ENCODE measurements at regions of chr2 and their contacts with region 1.

Region 1: GRCh38 chr2:43169987-43170386 is 56.4 kb downstream of the ZFP36L2 start:
- DNase-seq: peak in 1 of 2 experiments; percentile 88
- H3K4me3 ChIP-seq: no peak overlapping the region
- H3K27ac ChIP-seq: no peak overlapping the region
- H3K4me1 ChIP-seq: peaks cover 0 to 15% (median 2%) of the 10 kb centered on the region in 4 experiments; a peak in 6 of 7 replicates
- H3K27me3 ChIP-seq: no peaks in the 10 kb centered on the region
- CTCF ChIP-seq: peak; percentile 83 to 84 (median 83)
- EP300 ChIP-seq: no peak
- POLR2A ChIP-seq: no peak
- RAD21 ChIP-seq: peak; percentile 71 to 82

Region 2: DNA sequence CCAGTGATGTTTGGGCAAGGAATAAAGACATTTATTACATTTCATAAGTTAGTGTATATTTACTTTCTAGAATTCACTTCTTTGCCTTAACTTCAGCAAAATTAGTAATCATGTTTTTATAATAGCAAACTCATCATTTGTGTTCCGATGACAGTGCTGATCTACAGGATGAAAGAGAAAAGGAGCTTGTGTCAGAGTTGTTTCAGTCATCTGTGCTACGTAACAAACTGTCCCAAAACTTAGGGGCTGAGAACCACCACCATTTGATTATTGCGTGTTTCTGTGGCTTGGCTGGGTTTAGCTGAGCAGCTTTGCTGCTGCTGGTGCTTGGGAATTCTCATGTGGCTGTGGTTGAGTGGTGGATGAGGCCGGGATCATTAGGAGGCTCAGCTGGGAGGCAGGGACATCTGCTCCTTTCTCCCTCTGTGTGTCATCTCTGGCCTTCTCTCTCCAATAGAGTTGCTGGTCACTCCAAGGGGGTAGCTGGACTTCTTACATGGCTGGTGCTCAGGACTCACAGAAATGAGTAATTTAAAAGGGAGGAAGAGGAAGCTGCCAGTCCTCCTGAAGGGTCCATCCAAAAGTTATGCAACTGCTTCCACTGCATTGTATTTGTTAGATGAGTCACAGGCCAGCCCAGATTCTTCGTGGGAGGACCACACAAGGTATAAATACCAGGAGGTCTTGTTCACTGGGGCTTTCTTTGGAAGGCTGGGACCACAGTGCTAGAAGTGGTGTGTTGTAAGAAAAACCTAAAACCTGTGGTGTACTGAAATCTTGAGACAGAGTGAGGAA is 334.2 kb before region 1 on chr2:
- CTCF ChIA-PET with region 1: no interaction called
- POLR2A ChIA-PET with region 1: no interaction called
- DNase-seq: peak in 1 of 2 experiments; percentile 11
- H3K4me3 ChIP-seq: no peak overlapping the region
- H3K27ac ChIP-seq: no peak overlapping the region
- H3K4me1 ChIP-seq: no peaks in the 10 kb centered on the region
- H3K27me3 ChIP-seq: no peaks in the 10 kb centered on the region
- CTCF ChIP-seq: no peak
- EP300 ChIP-seq: no peak
- POLR2A ChIP-seq: no peak
- RAD21 ChIP-seq: no peak

Region 3: DNA sequence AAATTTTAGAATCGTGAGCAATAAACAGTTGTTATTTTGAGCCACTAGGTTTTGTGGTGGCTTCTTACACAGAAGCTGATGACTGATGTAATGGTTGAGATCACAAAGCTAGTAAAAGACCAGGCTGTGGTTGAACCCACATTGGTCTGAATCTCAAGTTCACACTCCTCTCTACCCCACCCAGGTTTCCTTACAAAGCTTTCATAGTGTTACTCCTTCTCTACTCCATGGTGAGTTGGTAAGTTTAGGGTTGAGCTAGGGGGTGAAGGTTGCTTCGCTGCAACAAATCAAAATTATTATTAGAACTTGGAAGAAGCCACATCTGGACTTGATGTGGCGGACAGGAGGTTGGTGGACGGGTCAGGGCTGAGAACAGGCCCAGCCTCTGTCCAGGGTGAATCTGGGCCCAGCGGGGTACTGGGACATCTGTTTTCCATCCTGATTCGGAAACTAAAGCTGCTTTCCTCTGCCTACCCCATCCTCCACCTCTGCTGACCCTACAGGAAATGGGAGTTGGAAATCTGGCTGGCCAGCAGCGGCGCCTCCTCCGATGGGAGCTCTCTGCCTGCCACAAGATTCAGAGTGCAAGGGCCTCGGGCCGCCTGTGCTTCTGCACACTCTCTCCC is 29.9 kb before region 1 on chr2:
- CTCF ChIA-PET with region 1: interaction called, 14 read pairs
- POLR2A ChIA-PET with region 1: no interaction called
- DNase-seq: no peak
- H3K4me3 ChIP-seq: no peak overlapping the region
- H3K27ac ChIP-seq: no peak overlapping the region
- H3K4me1 ChIP-seq: peaks cover 0 to 18% (median 8%) of the 10 kb centered on the region in 4 experiments; a peak in 6 of 7 replicates
- H3K27me3 ChIP-seq: no peaks in the 10 kb centered on the region
- CTCF ChIP-seq: no peak
- EP300 ChIP-seq: no peak
- POLR2A ChIP-seq: no peak
- RAD21 ChIP-seq: no peak

Region 4: DNA sequence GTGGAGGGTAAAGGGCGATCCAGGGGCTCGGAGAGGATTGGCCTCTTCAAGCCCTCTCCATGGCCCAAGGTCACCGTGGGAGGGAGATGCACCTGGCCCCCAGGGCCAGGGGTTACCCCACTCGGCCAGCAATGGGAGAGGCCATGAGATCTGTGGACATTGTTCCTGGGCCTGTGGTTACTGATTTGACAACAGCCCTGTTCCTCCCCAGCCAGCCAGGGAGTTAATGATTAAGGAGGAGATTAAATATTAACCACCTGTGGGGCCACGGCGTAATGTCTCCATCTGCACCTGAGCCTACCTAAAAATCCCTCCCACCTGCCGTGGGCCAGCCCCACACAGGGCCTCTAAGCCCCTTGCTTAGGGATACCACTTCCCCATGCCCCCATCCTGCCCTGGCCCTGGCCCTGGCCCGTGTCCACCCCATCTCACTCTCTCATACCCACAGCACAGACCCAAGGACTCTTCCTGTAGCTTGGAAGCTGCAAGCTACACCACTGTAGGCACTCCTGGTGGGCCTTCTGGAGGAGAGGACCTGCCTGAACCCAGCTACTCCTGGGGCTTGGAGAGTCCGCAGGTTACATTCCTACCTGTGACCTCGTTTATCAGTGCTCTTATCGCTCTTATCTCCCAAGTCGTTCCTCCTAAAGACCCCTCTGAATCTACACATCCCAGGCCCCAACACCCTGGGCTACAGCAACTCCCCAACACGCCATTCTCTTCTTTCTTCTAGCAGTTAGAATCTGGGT is 24.3 kb after region 1 on chr2:
- CTCF ChIA-PET with region 1: interaction called, 28 read pairs
- POLR2A ChIA-PET with region 1: no interaction called
- DNase-seq: no peak
- H3K4me3 ChIP-seq: no peak overlapping the region
- H3K27ac ChIP-seq: no peak overlapping the region
- H3K4me1 ChIP-seq: peaks cover 0 to 3% (median 1%) of the 10 kb centered on the region in 4 experiments; a peak in 4 of 7 replicates
- H3K27me3 ChIP-seq: no peaks in the 10 kb centered on the region
- CTCF ChIP-seq: no peak
- EP300 ChIP-seq: no peak
- POLR2A ChIP-seq: no peak
- RAD21 ChIP-seq: no peak

Region 5: DNA sequence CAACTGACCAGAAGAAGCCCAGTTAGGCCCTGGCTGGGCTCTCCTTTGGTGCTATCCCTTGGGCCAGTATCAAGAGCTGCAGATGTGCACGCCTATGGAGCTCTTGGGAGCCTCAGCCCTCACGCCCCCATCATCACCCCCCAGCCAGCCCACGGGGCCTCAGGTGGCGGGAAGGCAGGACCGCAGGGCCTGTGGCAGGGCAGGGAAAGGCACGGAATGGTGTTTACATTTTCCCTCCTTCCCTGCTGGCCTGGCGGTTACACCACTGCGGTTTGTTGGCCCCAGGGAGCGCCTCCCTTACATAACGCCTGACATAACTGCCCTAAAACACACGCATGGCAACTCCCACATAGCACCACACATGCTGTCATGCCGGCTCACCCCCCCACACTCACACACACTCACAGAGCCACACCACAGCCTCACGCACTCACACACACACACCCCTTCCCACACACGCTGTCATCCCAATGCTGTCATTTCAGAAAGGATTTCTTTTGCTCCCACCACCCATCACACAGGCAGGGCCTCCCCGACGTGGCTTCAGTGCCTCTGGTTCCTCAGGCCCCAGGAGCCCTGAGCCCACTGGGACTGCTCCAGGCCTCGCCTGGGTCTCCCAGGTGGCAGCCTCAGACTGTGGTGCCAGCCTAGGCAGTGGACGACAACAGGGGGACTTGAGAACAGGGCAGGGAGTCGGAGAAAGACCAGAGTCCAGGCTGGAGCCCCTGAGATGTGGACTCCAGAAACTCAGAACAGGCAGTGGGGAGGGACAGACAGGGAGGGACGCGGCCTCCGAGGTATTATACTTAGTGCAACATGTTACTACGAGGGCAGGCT is 40.7 kb after region 1 on chr2:
- CTCF ChIA-PET with region 1: interaction called, 65 read pairs
- POLR2A ChIA-PET with region 1: interaction called, 3 read pairs
- DNase-seq: no peak
- H3K4me3 ChIP-seq: no peak overlapping the region
- H3K27ac ChIP-seq: no peak overlapping the region
- H3K4me1 ChIP-seq: peaks cover 0 to 12% (median 6%) of the 10 kb centered on the region in 4 experiments; a peak in 5 of 7 replicates
- H3K27me3 ChIP-seq: no peaks in the 10 kb centered on the region
- CTCF ChIP-seq: no peak
- EP300 ChIP-seq: no peak
- POLR2A ChIP-seq: no peak
- RAD21 ChIP-seq: no peak

Region 6: GRCh38 chr2:43312755-43313641 is 143.0 kb after region 1 on chr2:
- CTCF ChIA-PET with region 1: no interaction called
- POLR2A ChIA-PET with region 1: no interaction called
- DNase-seq: no peak
- H3K4me3 ChIP-seq: no peak overlapping the region
- H3K27ac ChIP-seq: no peak overlapping the region
- H3K4me1 ChIP-seq: no peaks in the 10 kb centered on the region
- H3K27me3 ChIP-seq: no peaks in the 10 kb centered on the region
- CTCF ChIP-seq: no peak
- EP300 ChIP-seq: no peak
- POLR2A ChIP-seq: no peak
- RAD21 ChIP-seq: no peak

Region 7: GRCh38 chr2:43458002-43458628 is 288.1 kb after region 1 on chr2:
- CTCF ChIA-PET with region 1: no interaction called
- POLR2A ChIA-PET with region 1: no interaction called
- DNase-seq: no peak
- H3K4me3 ChIP-seq: no peak overlapping the region
- H3K27ac ChIP-seq: no peak overlapping the region
- H3K4me1 ChIP-seq: no peaks in the 10 kb centered on the region
- H3K27me3 ChIP-seq: no peaks in the 10 kb centered on the region
- CTCF ChIP-seq: no peak
- EP300 ChIP-seq: no peak
- POLR2A ChIP-seq: no peak
- RAD21 ChIP-seq: no peak

Measured in H1 (cell line).